ENCODE measurements at regions of chr20 and their contacts with region 1.

Region 1: GRCh38 chr20:45293041-45294002 is 13.3 kb upstream of the RBPJL start:
- DNase-seq: peak; percentile 66 to 84 (median 80)
- ATAC-seq: peak; percentile 91
- H3K4me3 ChIP-seq: peak overlapping the region; percentile 39 to 76
- H3K4me3 Mint-ChIP-seq: peak overlapping the region; percentile 80
- H3K27ac ChIP-seq: no peak overlapping the region
- H3K27ac Mint-ChIP-seq: no peak overlapping the region
- H3K4me1 ChIP-seq: no peaks in the 10 kb centered on the region
- H3K4me1 Mint-ChIP-seq: peaks cover 13% of the 10 kb centered on the region
- H3K27me3 ChIP-seq: peaks cover 7 to 8% of the 10 kb centered on the region in 2 experiments
- H3K27me3 Mint-ChIP-seq: peaks cover 45% of the 10 kb centered on the region
- CTCF ChIP-seq: peak; percentile 90

Region 2: GRCh38 chr20:45011108-45011526 is 282.2 kb before region 1 on chr20:
- CTCF ChIA-PET with region 1: interaction called, 4 read pairs
- POLR2A ChIA-PET with region 1: no interaction called
- intact Hi-C with region 1: loop called in 1 of 2 experiments (anchors 1 kb)
- DNase-seq: peak in 8 of 9 experiments; percentile 14 to 74 (median 57)
- ATAC-seq: peak; percentile 66
- H3K4me3 ChIP-seq: no peak overlapping the region
- H3K4me3 Mint-ChIP-seq: no peak overlapping the region
- H3K27ac ChIP-seq: peak overlapping the region in 1 of 2 experiments; percentile 29
- H3K27ac Mint-ChIP-seq: peak overlapping the region; percentile 35
- H3K4me1 ChIP-seq: peaks cover 23% of the 10 kb centered on the region
- H3K4me1 Mint-ChIP-seq: peaks cover 70% of the 10 kb centered on the region
- H3K27me3 ChIP-seq: no peaks in the 10 kb centered on the region
- H3K27me3 Mint-ChIP-seq: no peaks in the 10 kb centered on the region
- CTCF ChIP-seq: peak; percentile 74

Region 3: DNA sequence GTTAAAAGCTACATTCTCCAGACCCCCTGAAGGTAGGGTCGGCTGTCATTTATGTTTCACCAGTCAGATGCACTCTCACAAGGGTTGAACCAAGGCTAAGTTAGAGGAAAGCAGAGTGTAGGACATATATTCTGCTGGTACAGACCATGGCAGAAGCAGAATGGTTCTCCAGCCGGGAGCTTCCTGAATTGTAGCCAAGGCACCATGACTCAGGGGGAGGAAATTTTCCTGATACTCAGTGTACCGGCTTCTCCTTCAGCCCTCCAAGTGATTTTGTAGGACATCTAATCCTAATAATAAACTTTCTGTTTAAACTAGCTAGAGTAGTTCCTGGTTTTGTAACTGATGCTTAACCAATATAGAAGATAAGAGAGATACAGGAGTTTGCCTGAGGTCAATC is 24.8 kb before region 1 on chr20:
- CTCF ChIA-PET with region 1: interaction called, 11 read pairs
- POLR2A ChIA-PET with region 1: no interaction called
- intact Hi-C with region 1: no loop called
- DNase-seq: no peak
- ATAC-seq: no peak
- H3K4me3 ChIP-seq: no peak overlapping the region
- H3K4me3 Mint-ChIP-seq: no peak overlapping the region
- H3K27ac ChIP-seq: no peak overlapping the region
- H3K27ac Mint-ChIP-seq: no peak overlapping the region
- H3K4me1 ChIP-seq: no peaks in the 10 kb centered on the region
- H3K4me1 Mint-ChIP-seq: no peaks in the 10 kb centered on the region
- H3K27me3 ChIP-seq: peaks cover 2 to 3% of the 10 kb centered on the region in 2 experiments
- H3K27me3 Mint-ChIP-seq: peaks cover 27% of the 10 kb centered on the region
- CTCF ChIP-seq: no peak

Region 4: DNA sequence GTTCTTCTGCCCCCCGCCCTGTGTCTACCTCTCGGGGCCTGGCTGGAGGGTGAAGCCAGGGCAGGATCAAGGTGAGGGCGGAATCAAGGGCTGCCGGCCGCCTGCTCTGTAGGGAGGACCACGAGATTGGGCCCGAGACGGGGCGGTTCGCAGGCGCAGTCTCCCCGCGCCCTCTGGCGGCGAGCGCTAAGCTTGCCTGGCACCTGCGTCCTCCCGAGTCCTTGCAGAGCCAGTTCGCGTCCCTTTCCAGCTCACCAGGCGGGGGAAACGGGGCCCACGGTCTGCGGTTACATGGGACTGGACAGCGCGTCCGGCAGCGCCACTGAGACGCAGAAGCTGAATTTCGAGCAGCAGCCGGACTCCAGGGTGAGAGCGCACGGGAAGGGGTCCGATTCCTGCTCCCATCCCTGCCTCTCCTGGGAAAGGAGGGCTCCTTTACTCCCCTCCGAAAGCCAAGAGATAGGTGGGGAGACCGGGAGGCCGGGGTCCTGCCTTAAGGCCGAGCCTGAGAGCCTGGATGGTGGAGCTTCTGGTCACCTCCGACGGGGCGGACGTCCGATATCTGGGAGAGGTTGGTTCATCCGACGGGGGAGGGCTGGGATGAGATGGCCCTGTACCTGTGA is 18.4 kb after region 1 on chr20:
- CTCF ChIA-PET with region 1: interaction called, 12 read pairs
- POLR2A ChIA-PET with region 1: no interaction called
- intact Hi-C with region 1: no loop called
- DNase-seq: peak; percentile 24 to 69 (median 52)
- ATAC-seq: peak; percentile 66
- H3K4me3 ChIP-seq: no peak overlapping the region
- H3K4me3 Mint-ChIP-seq: no peak overlapping the region
- H3K27ac ChIP-seq: no peak overlapping the region
- H3K27ac Mint-ChIP-seq: no peak overlapping the region
- H3K4me1 ChIP-seq: no peaks in the 10 kb centered on the region
- H3K4me1 Mint-ChIP-seq: peaks cover 6% of the 10 kb centered on the region
- H3K27me3 ChIP-seq: peaks cover 0 to 10% of the 10 kb centered on the region in 2 experiments
- H3K27me3 Mint-ChIP-seq: peaks cover 48% of the 10 kb centered on the region
- CTCF ChIP-seq: peak; percentile 67